IMR-90 (cell line): ENCODE measurements at regions of chr13 and their contacts with region 1.

Region 1: DNA sequence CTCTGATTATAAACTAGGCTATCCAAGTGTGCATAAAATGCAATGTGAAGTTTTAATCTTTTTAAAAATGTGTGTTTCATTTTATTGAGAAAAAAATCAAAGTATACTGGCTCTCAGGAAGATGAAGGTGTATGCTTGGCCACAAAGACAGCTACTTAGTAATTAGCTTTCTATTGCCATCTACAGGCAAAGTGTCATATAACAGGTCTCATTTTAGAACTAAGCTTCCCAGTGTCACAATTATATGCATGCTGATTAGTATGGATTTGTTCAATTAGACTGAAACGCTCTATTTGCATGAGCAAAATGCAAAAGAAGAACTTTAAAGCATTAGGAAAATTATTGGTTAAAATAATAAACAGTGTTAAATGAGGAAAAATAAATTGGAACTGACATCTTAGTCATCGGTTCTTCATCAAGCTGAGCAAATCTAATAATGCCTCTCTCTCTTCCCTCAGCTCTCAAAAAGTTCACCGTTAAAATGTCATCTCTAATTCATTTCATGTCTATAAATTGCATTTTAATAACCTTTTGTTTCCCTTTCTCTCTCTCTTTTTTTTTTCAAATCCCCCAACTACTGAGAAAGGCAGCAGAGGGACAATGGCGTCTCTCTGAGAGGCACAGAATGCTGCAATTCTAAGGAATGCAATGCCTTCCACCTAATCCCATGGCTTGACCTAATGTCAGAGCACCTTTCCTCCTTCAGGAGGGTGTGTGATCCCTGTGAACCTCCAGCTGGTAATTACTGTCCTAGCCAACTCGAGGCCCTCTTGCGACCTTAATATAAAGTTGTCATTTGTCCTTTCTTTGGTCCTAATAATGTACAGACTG is 313.1 kb upstream of the MAB21L1 start:
- DNase-seq: peak; percentile 61
- ATAC-seq: peak; percentile 86
- H3K4me3 ChIP-seq: no peak overlapping the region
- H3K27ac ChIP-seq: no peak overlapping the region
- H3K4me1 ChIP-seq: peaks cover 2% of the 10 kb centered on the region; the same call in 1 of the 2 replicates
- H3K27me3 ChIP-seq: no peaks in the 10 kb centered on the region
- CTCF ChIP-seq: peak; percentile 66
- POLR2A ChIP-seq: no peak
- RAD21 ChIP-seq: peak; percentile 70

Region 2: DNA sequence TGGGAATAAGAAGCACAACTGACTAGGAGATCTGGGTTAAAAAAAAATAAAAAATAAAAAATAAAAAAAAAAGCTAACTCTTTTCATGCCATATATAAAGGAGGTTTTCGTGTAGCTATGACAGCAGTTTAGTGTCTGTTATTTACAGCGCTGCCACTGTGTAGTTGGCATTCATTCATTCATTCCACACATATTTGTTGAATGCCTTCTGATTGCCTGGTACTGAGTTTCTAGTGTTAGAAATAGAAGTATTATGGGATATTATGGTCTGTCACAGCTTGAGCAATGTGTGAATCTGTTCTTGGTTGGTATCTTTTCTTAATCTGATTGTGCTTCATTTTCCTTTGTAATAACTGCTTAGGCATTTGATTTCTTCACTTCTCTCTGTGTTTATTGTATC is 610.1 kb before region 1 on chr13:
- CTCF ChIA-PET with region 1: interaction called, 6 read pairs
- POLR2A ChIA-PET with region 1: no interaction called
- dilution Hi-C with region 1: no loop called
- in situ Hi-C with region 1: no loop called
- intact Hi-C with region 1: loop called (anchors 5 kb)
- DNase-seq: no peak
- ATAC-seq: no peak; the same call in 1 of the 2 replicates
- H3K4me3 ChIP-seq: no peak overlapping the region
- H3K27ac ChIP-seq: no peak overlapping the region
- H3K4me1 ChIP-seq: no peaks in the 10 kb centered on the region
- H3K27me3 ChIP-seq: no peaks in the 10 kb centered on the region
- CTCF ChIP-seq: no peak
- POLR2A ChIP-seq: no peak
- RAD21 ChIP-seq: no peak

Region 3: DNA sequence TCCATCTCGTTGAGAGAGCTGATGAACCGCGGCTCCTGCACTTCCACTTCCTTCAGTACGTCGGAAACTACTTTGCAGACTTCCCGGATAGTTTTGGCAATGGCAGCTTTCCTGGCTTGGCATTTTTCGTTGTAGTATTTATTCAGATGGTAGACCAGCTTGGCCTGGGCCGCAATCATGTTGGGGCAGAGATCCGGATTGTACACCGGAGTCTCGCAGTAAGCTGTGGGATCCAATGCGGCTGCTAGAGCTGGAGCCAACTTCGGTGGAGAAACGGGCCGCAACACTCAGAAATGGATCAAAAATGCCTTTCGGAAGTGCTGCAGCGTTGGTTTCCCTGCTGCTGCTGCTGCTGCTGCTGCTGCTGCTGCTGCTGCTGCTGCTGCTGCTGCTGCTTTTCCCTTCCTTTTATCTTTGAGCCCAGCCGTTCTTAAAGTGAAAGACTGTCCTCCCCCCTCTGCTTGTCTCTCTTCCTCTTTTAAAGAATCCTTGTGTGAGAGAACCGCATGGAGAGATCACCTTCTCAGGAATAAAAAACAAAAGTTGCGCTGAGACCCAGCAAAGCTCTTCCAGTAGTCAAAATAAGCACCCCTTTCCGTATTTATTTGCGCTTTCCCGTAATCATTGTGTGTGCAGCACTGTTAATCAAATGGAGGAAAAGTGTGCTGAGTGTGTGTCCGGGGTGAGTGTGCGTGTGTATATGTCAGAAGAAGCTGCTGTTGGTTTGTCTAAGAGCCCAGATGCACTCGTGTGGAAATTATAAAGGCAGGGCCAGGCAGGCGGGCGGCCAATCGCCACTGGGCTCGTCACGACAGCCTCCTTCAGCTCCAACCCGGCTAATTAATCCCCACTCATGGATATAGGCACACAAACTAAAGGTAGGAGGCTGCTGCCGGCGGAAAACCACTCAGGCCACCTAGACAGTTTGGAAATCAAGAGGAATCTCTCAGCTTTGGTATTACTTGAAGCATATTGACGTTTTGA is 313.3 kb before region 1 on chr13 and contains the start of gene MAB21L1:
- CTCF ChIA-PET with region 1: no interaction called
- POLR2A ChIA-PET with region 1: no interaction called
- dilution Hi-C with region 1: no loop called
- in situ Hi-C with region 1: no loop called
- intact Hi-C with region 1: loop called (anchors 5 kb)
- DNase-seq: peak; percentile 19
- ATAC-seq: peak; percentile 69
- H3K4me3 ChIP-seq: peak within 1 kb of the TSS; percentile 43
- H3K27ac ChIP-seq: no peak within 1 kb of the TSS
- H3K4me1 ChIP-seq: no peaks in the 10 kb centered on the region
- H3K27me3 ChIP-seq: peaks cover 54% of the 10 kb centered on the region
- CTCF ChIP-seq: no peak
- POLR2A ChIP-seq: no peak
- RAD21 ChIP-seq: no peak
- total RNA-seq, gene MAB21L1: 0.72 and 0.83 TPM in 2 replicates

Region 4: GRCh38 chr13:35630551-35631275 is 158.8 kb before region 1 on chr13:
- CTCF ChIA-PET with region 1: interaction called, 5 read pairs
- POLR2A ChIA-PET with region 1: no interaction called
- dilution Hi-C with region 1: no loop called
- in situ Hi-C with region 1: no loop called
- intact Hi-C with region 1: loop called (anchors 1 kb)
- DNase-seq: peak; percentile 70
- ATAC-seq: peak; percentile 98
- H3K4me3 ChIP-seq: no peak overlapping the region
- H3K27ac ChIP-seq: no peak overlapping the region
- H3K4me1 ChIP-seq: no peaks in the 10 kb centered on the region
- H3K27me3 ChIP-seq: no peaks in the 10 kb centered on the region
- CTCF ChIP-seq: peak; percentile 68
- POLR2A ChIP-seq: no peak
- RAD21 ChIP-seq: peak; percentile 66